ENCODE measurements at regions of chr14 and their contacts with region 1.

Region 1: GRCh38 chr14:92651106-92651757 is 97.2 kb downstream of the LGMN start:
- DNase-seq: peak; percentile 89
- ATAC-seq: peak; percentile 74
- H3K4me3 ChIP-seq: peak overlapping the region; percentile 1 to 91 (median 80)
- H3K4me3 Mint-ChIP-seq: peak overlapping the region; percentile 100
- H3K27ac ChIP-seq: peak overlapping the region; percentile 82 to 92
- H3K27ac Mint-ChIP-seq: peak overlapping the region; percentile 97
- H3K4me1 ChIP-seq: peaks cover 50 to 85% of the 10 kb centered on the region in 2 donors
- H3K4me1 Mint-ChIP-seq: peaks cover 71% of the 10 kb centered on the region
- H3K27me3 ChIP-seq: no peaks in the 10 kb centered on the region
- H3K27me3 Mint-ChIP-seq: no peaks in the 10 kb centered on the region
- CTCF ChIP-seq: no peak

Region 2: GRCh38 chr14:92568621-92569479 is 82.4 kb before region 1 on chr14:
- CTCF ChIA-PET with region 1: interaction called, 3 read pairs
- POLR2A ChIA-PET with region 1: no interaction called
- intact Hi-C with region 1: loop called (anchors 5 kb)
- DNase-seq: peak; percentile 82
- ATAC-seq: peak; percentile 80
- H3K4me3 ChIP-seq: peak overlapping the region in 3 of 5 experiments; percentile 4 to 22 (median 16)
- H3K4me3 Mint-ChIP-seq: peak overlapping the region; percentile 77
- H3K27ac ChIP-seq: peak overlapping the region; percentile 90 to 94
- H3K27ac Mint-ChIP-seq: peak overlapping the region; percentile 94
- H3K4me1 ChIP-seq: peaks cover 27 to 32% of the 10 kb centered on the region in 2 donors
- H3K4me1 Mint-ChIP-seq: peaks cover 41% of the 10 kb centered on the region
- H3K27me3 ChIP-seq: no peaks in the 10 kb centered on the region
- H3K27me3 Mint-ChIP-seq: no peaks in the 10 kb centered on the region
- CTCF ChIP-seq: no peak

Region 3: GRCh38 chr14:92637228-92637627 is 14.0 kb before region 1 on chr14:
- CTCF ChIA-PET with region 1: interaction called, 4 read pairs
- POLR2A ChIA-PET with region 1: interaction called, 3 read pairs
- intact Hi-C with region 1: loop called (anchors 1 kb)
- DNase-seq: no peak
- ATAC-seq: no peak
- H3K4me3 ChIP-seq: no peak overlapping the region
- H3K4me3 Mint-ChIP-seq: no peak overlapping the region
- H3K27ac ChIP-seq: no peak overlapping the region
- H3K27ac Mint-ChIP-seq: no peak overlapping the region
- H3K4me1 ChIP-seq: peaks cover 31 to 32% of the 10 kb centered on the region in 2 donors
- H3K4me1 Mint-ChIP-seq: peaks cover 34% of the 10 kb centered on the region
- H3K27me3 ChIP-seq: no peaks in the 10 kb centered on the region
- H3K27me3 Mint-ChIP-seq: no peaks in the 10 kb centered on the region
- CTCF ChIP-seq: no peak

Region 4: GRCh38 chr14:92670160-92670559 is 18.9 kb after region 1 on chr14:
- CTCF ChIA-PET with region 1: interaction called, 48 read pairs
- POLR2A ChIA-PET with region 1: interaction called, 31 read pairs
- intact Hi-C with region 1: loop called (anchors 1 kb)
- DNase-seq: peak; percentile 50
- ATAC-seq: no peak
- H3K4me3 ChIP-seq: no peak overlapping the region
- H3K4me3 Mint-ChIP-seq: peak overlapping the region; percentile 33
- H3K27ac ChIP-seq: peak overlapping the region in 1 of 2 donors; percentile 29
- H3K27ac Mint-ChIP-seq: peak overlapping the region; percentile 75
- H3K4me1 ChIP-seq: peaks cover 53 to 74% of the 10 kb centered on the region in 2 donors
- H3K4me1 Mint-ChIP-seq: peaks cover 81% of the 10 kb centered on the region
- H3K27me3 ChIP-seq: no peaks in the 10 kb centered on the region
- H3K27me3 Mint-ChIP-seq: no peaks in the 10 kb centered on the region
- CTCF ChIP-seq: no peak

Region 5: DNA sequence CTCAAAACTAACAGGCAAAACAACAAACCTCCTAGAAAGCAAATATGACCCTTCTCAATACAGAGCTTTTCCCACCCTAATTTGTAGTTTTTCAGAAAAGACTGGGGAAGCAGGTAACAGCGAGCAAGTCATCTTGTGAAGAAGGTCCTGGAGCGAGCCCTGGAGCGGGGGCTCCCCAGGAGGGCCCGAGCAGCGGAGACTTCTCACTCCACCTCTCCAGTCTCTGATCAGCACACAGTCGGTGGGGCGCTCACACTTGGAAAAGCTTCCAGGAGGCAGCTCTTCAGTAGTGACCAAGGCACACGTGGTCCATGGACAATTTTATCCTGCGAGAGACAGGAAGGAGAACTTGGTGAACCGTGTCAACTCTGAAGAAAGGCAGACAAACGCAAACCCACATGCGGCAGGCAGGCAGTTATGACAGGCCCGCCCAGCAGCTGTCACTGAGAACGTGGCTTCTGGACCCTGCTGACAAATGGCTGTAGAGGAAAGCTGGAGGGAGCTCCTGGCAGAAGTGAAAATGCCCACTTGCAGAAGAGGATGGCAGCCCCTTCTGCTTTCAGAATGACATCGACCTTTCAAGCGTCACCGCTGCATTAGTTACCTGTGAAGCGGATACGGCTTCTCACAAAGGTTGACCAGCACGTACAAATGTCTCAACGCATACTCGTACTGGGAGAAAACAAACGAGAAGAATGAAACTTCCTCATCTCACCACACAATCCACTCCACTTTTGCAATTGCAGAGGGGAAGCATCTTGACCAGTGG is 53.0 kb after region 1 on chr14:
- CTCF ChIA-PET with region 1: no interaction called
- POLR2A ChIA-PET with region 1: no interaction called
- intact Hi-C with region 1: loop called (anchors 2 kb)
- DNase-seq: peak; percentile 88
- ATAC-seq: peak; percentile 98
- H3K4me3 ChIP-seq: peak overlapping the region in 2 of 5 experiments; percentile 17 to 22
- H3K4me3 Mint-ChIP-seq: peak overlapping the region; percentile 78
- H3K27ac ChIP-seq: peak overlapping the region; percentile 71 to 91
- H3K27ac Mint-ChIP-seq: peak overlapping the region; percentile 86
- H3K4me1 ChIP-seq: peaks cover 40 to 50% of the 10 kb centered on the region in 2 donors
- H3K4me1 Mint-ChIP-seq: peaks cover 56% of the 10 kb centered on the region
- H3K27me3 ChIP-seq: no peaks in the 10 kb centered on the region
- H3K27me3 Mint-ChIP-seq: no peaks in the 10 kb centered on the region
- CTCF ChIP-seq: no peak

Region 6: DNA sequence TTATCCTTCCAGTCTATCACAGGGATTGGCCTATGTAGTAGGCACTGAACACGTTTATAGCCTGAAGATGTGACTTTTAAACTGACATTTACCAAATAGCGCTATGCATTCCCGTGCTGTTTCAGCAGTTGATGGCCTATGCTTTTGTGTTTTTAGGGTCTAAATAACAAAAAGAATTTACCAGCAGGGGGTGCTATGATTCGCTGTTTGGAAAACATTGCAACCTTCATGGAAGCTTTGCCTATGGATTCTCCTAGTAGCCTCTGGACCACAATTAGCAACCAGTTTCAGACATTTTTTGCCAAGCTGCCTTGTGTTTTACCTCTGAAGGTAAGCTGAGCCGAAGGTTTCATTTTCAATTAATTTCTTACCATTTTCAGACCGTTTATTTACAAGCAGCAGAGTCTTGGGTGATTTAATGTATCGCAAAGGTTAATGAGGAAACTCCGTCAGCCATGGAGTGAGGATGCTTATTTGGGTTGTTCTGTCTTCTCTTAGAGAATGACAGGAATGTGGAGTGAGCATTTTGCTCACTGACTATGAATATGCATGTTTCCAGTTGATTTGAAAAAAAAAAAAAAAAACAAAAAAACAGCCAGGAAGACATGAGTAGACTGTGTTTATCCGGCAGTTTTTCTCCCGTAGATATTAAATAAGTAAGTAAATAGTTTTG is 1004.0 kb after region 1 on chr14:
- CTCF ChIA-PET with region 1: no interaction called
- POLR2A ChIA-PET with region 1: no interaction called
- intact Hi-C with region 1: no loop called
- DNase-seq: peak; percentile 12
- ATAC-seq: no peak
- H3K4me3 ChIP-seq: no peak overlapping the region
- H3K4me3 Mint-ChIP-seq: no peak overlapping the region
- H3K27ac ChIP-seq: no peak overlapping the region
- H3K27ac Mint-ChIP-seq: no peak overlapping the region
- H3K4me1 ChIP-seq: no peaks in the 10 kb centered on the region
- H3K4me1 Mint-ChIP-seq: no peaks in the 10 kb centered on the region
- H3K27me3 ChIP-seq: peaks cover 0 to 12% (median 5%) of the 10 kb centered on the region in 4 experiments
- H3K27me3 Mint-ChIP-seq: peaks cover 27% of the 10 kb centered on the region
- CTCF ChIP-seq: peak; percentile 56

Measured in B cell (primary cell).